CD14-positive monocyte (primary cell): ENCODE measurements at regions of chr17 and their contacts with region 1.

Region 1: GRCh38 chr17:16068323-16068722 is 68.7 kb downstream of the TTC19 start:
- DNase-seq: no peak
- H3K4me3 ChIP-seq: no peak overlapping the region
- H3K4me3 Mint-ChIP-seq: no peak overlapping the region
- H3K27ac ChIP-seq: no peak overlapping the region
- H3K27ac Mint-ChIP-seq: peak overlapping the region in 1 of 7 donors; percentile 21
- H3K4me1 ChIP-seq: no peaks in the 10 kb centered on the region
- H3K4me1 Mint-ChIP-seq: no peaks in the 10 kb centered on the region
- H3K27me3 ChIP-seq: no peaks in the 10 kb centered on the region
- H3K27me3 Mint-ChIP-seq: no peaks in the 10 kb centered on the region
- CTCF ChIP-seq: no peak

Region 2: DNA sequence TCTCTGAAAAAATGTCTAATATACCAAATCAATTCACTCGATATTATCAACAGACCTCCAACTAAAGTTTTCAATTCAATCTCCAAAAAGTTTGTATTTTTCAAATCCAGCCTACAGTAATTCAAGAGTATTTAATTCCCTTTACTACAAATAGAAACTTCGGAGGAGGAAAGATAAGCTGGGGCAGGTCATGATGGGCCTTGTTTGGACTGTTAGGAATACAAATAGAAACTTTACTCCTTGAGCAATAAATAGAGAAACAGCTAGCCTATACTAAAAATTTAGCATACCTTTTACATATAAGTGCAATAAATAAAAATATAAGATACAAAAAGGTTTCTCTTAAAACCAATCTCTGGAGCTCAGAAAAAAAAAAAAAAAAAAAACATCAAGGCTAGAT is 48.8 kb after region 1 on chr17:
- intact Hi-C with region 1: loop called in 1 of 2 experiments (anchors 10 kb)
- DNase-seq: no peak
- H3K4me3 ChIP-seq: no peak overlapping the region
- H3K4me3 Mint-ChIP-seq: no peak overlapping the region
- H3K27ac ChIP-seq: no peak overlapping the region
- H3K27ac Mint-ChIP-seq: no peak overlapping the region
- H3K4me1 ChIP-seq: no peaks in the 10 kb centered on the region
- H3K4me1 Mint-ChIP-seq: no peaks in the 10 kb centered on the region
- H3K27me3 ChIP-seq: no peaks in the 10 kb centered on the region
- H3K27me3 Mint-ChIP-seq: peaks cover 0 to 4% (median 0%) of the 10 kb centered on the region in 3 donors
- CTCF ChIP-seq: no peak